Common myeloid progenitor, CD34-positive (primary cell): ENCODE measurements at regions of chr6 and their contacts with region 1.

Region 1: DNA sequence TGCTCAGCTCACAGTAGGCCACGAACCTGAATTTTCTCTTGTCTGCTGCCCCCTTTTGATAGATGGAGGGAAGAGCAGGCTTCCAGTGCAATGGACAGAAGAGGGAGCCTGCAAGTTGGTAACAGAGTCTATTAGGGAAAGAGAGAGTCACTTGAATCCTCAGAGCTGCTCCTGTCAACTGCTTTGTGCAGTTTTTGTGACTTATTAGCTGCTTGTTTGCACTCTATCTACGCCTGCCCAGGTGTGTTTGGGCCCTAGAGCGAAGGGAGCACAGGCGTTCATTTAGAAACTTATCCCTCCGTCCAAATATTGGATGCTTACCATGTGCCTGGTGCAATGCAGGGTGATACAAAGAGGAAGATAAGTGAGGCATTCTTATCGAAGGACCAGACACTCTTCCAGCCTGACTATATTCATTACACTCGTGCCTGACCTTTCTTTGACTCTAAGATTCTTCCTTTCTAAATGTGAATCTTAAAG is 11.6 kb upstream of the SLC2A12 start:
- DNase-seq: peak; percentile 77 to 86 (median 83)
- H3K4me3 ChIP-seq: no peak overlapping the region
- H3K27ac ChIP-seq: no peak overlapping the region
- H3K4me1 ChIP-seq: no peaks in the 10 kb centered on the region
- H3K27me3 ChIP-seq: peaks cover 0 to 4% (median 2%) of the 10 kb centered on the region in 5 experiments

Region 2: GRCh38 chr6:133923938-133924593 is 139.9 kb before region 1 on chr6:
- CTCF ChIA-PET with region 1: interaction called, 87 read pairs
- POLR2A ChIA-PET with region 1: no interaction called
- DNase-seq: peak; percentile 72 to 79 (median 74)
- H3K4me3 ChIP-seq: no peak overlapping the region
- H3K27ac ChIP-seq: no peak overlapping the region
- H3K4me1 ChIP-seq: no peaks in the 10 kb centered on the region
- H3K27me3 ChIP-seq: peaks cover 3 to 40% (median 8%) of the 10 kb centered on the region in 5 experiments

Region 3: GRCh38 chr6:133966654-133967329 is 97.2 kb before region 1 on chr6:
- CTCF ChIA-PET with region 1: interaction called, 39 read pairs
- POLR2A ChIA-PET with region 1: no interaction called
- DNase-seq: no peak
- H3K4me3 ChIP-seq: no peak overlapping the region
- H3K27ac ChIP-seq: no peak overlapping the region
- H3K4me1 ChIP-seq: no peaks in the 10 kb centered on the region
- H3K27me3 ChIP-seq: no peaks in the 10 kb centered on the region

Region 4: GRCh38 chr6:134026597-134026996 is 37.4 kb before region 1 on chr6:
- CTCF ChIA-PET with region 1: interaction called, 11 read pairs
- POLR2A ChIA-PET with region 1: no interaction called
- DNase-seq: no peak
- H3K4me3 ChIP-seq: no peak overlapping the region
- H3K27ac ChIP-seq: no peak overlapping the region
- H3K4me1 ChIP-seq: peaks cover 4 to 9% (median 5%) of the 10 kb centered on the region in 4 experiments
- H3K27me3 ChIP-seq: peaks cover 0 to 41% (median 15%) of the 10 kb centered on the region in 5 experiments

Region 5: DNA sequence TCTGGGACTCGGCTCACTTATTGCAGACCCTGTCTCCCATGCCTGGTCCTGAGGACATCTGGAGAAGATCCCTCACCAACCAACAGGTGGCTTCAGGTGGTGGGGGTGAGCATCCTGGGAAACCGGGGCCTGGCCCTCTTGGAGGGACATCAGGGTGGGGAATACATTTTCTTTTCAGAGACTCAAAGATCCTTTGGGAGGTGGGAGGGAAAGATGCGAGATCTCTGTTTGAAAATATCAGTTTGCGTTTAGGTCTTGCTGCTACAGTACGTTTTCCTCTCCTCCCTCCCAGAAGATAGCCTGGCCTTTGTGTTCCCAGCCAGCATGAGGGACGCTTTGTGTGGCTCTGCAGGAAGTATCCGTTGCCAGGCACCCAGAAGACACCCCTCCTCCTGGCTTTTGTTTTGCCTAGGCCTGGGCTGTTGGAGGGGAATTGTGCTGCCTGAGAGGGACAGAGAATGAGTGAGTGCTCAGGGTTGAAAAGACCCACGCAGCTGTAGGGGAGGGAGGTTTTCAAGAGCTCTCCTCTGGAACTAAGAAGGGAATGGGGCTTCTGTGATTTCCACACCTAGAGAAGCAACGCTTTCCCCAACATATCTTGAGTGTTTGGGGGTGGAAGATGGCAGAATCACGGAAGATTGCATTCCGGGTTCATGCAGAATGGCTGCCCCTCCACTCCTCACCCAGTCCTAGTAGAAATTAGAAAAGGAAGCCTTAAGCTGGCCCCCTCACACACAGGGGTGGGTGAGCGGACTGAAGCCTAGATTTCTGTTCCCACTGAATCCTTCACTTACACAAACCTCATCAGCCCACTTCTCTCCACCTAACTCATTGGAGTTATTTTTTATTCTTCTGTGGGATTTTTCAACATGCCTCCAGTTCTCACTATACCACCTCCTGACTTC is 10.4 kb after region 1 on chr6:
- CTCF ChIA-PET with region 1: interaction called, 26 read pairs
- POLR2A ChIA-PET with region 1: no interaction called
- DNase-seq: no peak
- H3K4me3 ChIP-seq: no peak overlapping the region
- H3K27ac ChIP-seq: no peak overlapping the region
- H3K4me1 ChIP-seq: peaks cover 0 to 5% (median 0%) of the 10 kb centered on the region in 4 experiments
- H3K27me3 ChIP-seq: peaks cover 0 to 3% (median 0%) of the 10 kb centered on the region in 5 experiments

Region 6: GRCh38 chr6:134097114-134097707 is 33.2 kb after region 1 on chr6:
- CTCF ChIA-PET with region 1: interaction called, 11 read pairs
- POLR2A ChIA-PET with region 1: no interaction called
- DNase-seq: peak; percentile 71 to 86 (median 78)
- H3K4me3 ChIP-seq: no peak overlapping the region
- H3K27ac ChIP-seq: no peak overlapping the region
- H3K4me1 ChIP-seq: no peaks in the 10 kb centered on the region
- H3K27me3 ChIP-seq: peaks cover 0 to 10% (median 6%) of the 10 kb centered on the region in 5 experiments